ENCODE measurements at regions of chr10 and their contacts with region 1.

Region 1: GRCh38 chr10:95693668-95694534 is at the start of gene TCTN3:
- DNase-seq: peak; percentile 92 to 100 (median 95)
- ATAC-seq: peak; percentile 94
- H3K4me3 ChIP-seq: peak within 1 kb of the TSS; percentile 65 to 76
- H3K4me3 Mint-ChIP-seq: peak within 1 kb of the TSS; percentile 95
- H3K27ac ChIP-seq: peak within 1 kb of the TSS; percentile 87 to 89
- H3K27ac Mint-ChIP-seq: peak within 1 kb of the TSS; percentile 96
- H3K4me1 ChIP-seq: peaks cover 24% of the 10 kb centered on the region
- H3K4me1 Mint-ChIP-seq: peaks cover 41% of the 10 kb centered on the region
- H3K27me3 ChIP-seq: no peaks in the 10 kb centered on the region
- H3K27me3 Mint-ChIP-seq: peaks cover 3% of the 10 kb centered on the region
- CTCF ChIP-seq: peak; percentile 98
- total RNA-seq, gene TCTN3: 14.3 to 15.6 TPM

Region 2: DNA sequence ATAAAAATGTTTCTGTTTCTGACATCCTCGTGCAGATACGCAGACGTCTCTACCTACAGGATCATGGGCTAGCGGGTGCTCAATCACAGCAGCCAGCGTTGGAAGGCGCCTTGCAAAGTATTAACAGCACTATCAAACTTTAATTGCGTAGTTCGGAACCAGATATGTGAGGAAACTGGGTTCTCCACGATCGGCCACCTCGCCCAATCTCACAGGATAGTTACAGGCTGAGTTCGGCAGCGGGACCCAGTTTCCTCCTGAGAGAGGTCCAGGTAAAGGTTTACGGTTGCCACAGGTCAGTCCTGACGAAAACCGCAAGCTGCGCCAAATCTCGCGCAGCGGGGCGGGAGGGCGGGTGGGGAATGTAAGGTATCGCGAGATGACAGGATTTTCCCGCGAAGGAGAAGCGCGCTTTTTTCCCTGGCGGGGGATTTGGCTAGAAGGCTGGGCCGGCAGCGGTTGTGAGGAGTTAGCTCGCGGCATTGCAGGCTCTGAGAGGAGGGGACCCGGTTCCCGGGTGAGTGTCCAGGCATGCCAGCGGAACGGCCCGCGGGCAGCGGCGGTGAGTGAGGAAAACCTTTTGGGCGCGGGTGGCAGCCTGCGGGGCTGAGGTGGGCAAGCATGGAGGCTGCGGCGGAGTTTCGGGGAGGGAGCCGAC is 1148.4 kb before region 1 on chr10 and contains the start of gene HELLS:
- CTCF ChIA-PET with region 1: no interaction called
- POLR2A ChIA-PET with region 1: no interaction called
- intact Hi-C with region 1: loop called in 1 of 2 experiments (anchors 10 kb)
- DNase-seq: peak; percentile 17 to 83 (median 63)
- ATAC-seq: peak; percentile 76
- H3K4me3 ChIP-seq: peak within 1 kb of the TSS; percentile 90
- H3K4me3 Mint-ChIP-seq: peak within 1 kb of the TSS; percentile 93
- H3K27ac ChIP-seq: peak within 1 kb of the TSS; percentile 70 to 71
- H3K27ac Mint-ChIP-seq: peak within 1 kb of the TSS; percentile 93
- H3K4me1 ChIP-seq: peaks cover 18% of the 10 kb centered on the region
- H3K4me1 Mint-ChIP-seq: peaks cover 23% of the 10 kb centered on the region
- H3K27me3 ChIP-seq: no peaks in the 10 kb centered on the region
- H3K27me3 Mint-ChIP-seq: no peaks in the 10 kb centered on the region
- CTCF ChIP-seq: no peak
- total RNA-seq, gene HELLS: 8.7 to 9.1 TPM

Region 3: DNA sequence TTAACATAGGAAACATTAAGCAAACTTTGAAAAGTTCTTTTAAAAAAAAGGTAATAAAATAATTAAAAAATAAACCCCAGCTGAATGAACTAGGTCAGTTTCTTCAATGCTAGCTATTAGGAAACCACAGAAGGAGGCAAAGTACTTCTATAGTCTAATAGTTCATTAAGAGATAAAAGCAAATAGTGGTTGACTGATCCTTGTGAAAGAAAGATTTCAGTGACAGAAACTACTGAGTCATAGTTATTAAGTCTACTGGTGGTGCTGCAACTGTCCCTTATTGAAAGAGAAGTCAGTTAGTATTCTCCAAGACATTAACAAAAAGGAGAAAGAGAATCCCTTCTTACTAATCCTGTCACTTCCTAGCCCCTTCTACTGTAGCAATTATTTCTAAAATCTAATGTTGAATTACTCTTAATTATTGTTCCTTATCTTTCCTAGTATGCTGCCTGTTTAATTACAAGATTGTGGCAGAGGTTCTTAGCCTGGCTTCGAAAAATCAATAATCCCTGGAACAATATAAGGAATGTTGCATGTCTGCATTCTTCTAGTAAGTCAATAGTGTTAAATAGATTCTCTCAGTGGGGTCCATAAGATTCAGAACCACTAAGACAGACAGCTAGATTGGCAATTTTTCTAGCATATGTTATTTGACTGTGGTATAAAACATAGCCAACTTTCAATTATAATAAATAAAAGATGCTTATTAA is 18.3 kb before region 1 on chr10:
- CTCF ChIA-PET with region 1: interaction called, 20 read pairs
- POLR2A ChIA-PET with region 1: interaction called, 4 read pairs
- intact Hi-C with region 1: no loop called
- DNase-seq: no peak
- ATAC-seq: no peak
- H3K4me3 ChIP-seq: no peak overlapping the region
- H3K4me3 Mint-ChIP-seq: no peak overlapping the region
- H3K27ac ChIP-seq: no peak overlapping the region
- H3K27ac Mint-ChIP-seq: no peak overlapping the region
- H3K4me1 ChIP-seq: no peaks in the 10 kb centered on the region
- H3K4me1 Mint-ChIP-seq: no peaks in the 10 kb centered on the region
- H3K27me3 ChIP-seq: no peaks in the 10 kb centered on the region
- H3K27me3 Mint-ChIP-seq: no peaks in the 10 kb centered on the region
- CTCF ChIP-seq: no peak

Region 4: DNA sequence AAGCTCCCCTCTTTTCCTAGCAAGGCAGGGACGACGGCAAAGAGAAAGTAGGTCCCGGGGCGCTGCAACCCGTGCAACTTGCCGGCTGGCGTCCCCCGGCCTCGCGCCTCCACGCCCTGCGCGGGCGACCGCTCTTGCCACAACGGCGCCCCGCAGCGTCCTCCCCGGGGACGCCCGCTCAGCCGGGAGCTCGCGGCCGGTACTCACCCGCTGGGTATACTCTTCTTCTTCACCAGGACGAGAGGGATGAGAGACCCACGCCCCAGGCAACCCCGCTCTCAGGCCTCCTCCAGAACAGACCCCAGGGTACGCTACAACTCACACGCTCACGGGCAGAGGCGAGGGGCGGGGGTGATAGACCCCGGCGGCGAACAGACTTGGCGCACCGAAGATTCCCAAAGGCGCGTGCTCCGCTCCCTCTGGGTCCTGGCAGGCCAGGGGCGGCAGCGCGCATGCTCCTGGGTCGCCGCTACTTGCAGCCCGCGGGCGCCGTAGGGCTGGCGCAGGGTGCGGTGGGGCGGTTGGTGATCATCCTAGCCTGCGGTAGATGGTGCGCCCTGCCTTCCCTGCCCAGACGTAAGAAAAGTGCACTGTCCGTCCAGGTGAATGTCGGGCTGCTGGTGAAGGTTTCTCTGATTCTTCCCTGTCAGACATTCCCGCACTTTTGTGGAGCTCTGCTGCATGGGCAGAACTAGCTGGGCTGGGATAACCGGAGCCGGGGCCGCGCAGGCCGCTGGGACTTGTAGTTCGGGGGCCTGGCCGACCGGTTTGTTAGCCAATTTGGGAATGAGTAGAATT is 213.8 kb after region 1 on chr10 and contains the start of gene CC2D2B:
- CTCF ChIA-PET with region 1: interaction called, 8 read pairs
- POLR2A ChIA-PET with region 1: interaction called, 3 read pairs
- intact Hi-C with region 1: loop called (anchors 1 to 5 kb)
- DNase-seq: peak; percentile 21 to 79 (median 59)
- ATAC-seq: peak; percentile 72
- H3K4me3 ChIP-seq: peak within 1 kb of the TSS; percentile 77 to 82
- H3K4me3 Mint-ChIP-seq: peak within 1 kb of the TSS; percentile 90
- H3K27ac ChIP-seq: peak within 1 kb of the TSS; percentile 61 to 67
- H3K27ac Mint-ChIP-seq: peak within 1 kb of the TSS; percentile 83
- H3K4me1 ChIP-seq: no peaks in the 10 kb centered on the region
- H3K4me1 Mint-ChIP-seq: peaks cover 18% of the 10 kb centered on the region
- H3K27me3 ChIP-seq: no peaks in the 10 kb centered on the region
- H3K27me3 Mint-ChIP-seq: no peaks in the 10 kb centered on the region
- CTCF ChIP-seq: no peak
- total RNA-seq, gene CC2D2B: not detected

Region 5: DNA sequence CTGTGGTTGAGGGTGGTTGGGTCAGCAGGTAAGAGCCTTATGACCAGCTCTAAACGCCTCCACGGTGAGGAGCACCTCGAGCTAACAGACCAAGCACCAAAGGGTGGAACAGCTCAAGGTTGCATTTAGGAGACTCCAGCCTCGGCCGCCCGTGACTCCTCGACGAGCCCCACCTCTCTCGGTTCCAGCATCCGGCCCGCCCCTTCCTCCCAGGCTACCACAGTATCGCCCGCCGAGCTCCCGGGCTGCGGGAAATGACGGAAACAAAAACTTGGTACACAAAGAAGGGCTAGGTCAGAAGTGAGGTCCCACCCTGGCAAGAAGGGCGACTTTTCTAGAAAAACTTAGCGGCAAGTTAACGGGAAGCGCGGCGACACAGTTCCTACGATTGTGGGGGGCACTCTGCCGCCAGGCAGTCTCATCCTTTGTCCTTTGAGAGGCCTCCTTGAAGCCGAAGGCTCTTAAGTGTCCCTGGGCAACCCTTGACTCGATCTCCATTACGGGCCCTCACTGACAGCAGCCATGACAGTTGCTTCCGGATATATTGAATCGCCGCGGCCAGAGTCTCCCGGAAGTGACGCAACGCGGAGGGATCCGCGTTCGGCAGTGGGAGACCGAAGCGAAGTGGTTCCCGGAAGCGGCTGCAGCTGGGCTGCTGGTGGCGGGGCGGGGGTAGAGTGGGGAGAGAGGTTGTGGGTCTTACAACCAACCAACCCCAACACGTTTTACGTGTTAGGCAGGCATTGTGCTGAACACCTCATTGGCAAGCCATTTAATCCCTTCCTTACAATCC is 396.0 kb after region 1 on chr10:
- CTCF ChIA-PET with region 1: no interaction called
- POLR2A ChIA-PET with region 1: interaction called, 5 read pairs
- intact Hi-C with region 1: loop called in 1 of 2 experiments (anchors 1 kb)
- DNase-seq: peak; percentile 85 to 98 (median 92)
- ATAC-seq: peak; percentile 87
- H3K4me3 ChIP-seq: peak overlapping the region; percentile 69 to 71
- H3K4me3 Mint-ChIP-seq: peak overlapping the region; percentile 95
- H3K27ac ChIP-seq: peak overlapping the region; percentile 91 to 97
- H3K27ac Mint-ChIP-seq: peak overlapping the region; percentile 99
- H3K4me1 ChIP-seq: peaks cover 6% of the 10 kb centered on the region
- H3K4me1 Mint-ChIP-seq: peaks cover 12% of the 10 kb centered on the region
- H3K27me3 ChIP-seq: no peaks in the 10 kb centered on the region
- H3K27me3 Mint-ChIP-seq: peaks cover 21% of the 10 kb centered on the region
- CTCF ChIP-seq: no peak

Region 6: DNA sequence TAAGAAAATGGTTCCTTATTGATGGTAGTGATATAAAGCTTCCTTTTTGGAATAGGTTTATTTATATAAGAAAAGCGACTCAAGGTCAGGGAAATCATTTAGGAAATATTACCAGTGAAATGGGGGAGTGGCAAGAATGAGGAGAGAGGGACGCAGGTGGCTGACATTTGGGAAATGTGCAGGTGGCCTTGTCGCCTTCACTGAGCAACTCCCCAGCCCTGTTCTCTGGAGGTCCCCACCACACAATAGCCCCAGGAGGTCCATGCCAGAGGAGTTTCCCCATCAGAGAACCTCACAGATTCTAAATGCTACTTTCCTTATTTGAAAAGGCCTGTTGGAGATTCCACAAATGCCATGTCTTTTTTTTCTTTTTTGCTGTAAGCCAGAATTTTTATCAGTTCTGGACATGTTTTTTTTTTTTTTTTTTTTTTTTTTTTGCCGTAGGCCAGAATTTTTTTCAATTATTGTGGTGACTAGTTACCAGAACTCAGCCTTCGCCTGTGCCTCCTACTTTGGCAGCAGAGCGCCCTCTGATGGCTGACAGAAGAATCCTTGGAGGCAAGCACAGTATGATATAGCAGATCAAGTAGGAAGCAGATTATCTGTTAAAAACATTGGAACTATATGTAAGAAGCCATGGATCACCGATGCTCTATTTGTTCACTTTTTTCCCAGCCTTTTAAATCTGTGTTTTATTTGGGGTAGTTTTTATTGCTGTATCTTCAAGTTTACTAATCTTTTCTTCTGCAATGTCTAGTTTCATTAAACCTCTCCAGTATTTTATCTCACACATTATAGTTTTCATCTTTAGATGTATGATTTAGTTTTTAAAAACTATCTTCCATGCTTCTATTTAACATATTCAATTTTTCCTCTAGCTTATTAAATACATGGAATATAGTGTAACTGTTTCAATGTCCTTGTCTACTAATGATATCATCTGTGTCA is 646.3 kb after region 1 on chr10:
- CTCF ChIA-PET with region 1: interaction called, 5 read pairs
- POLR2A ChIA-PET with region 1: no interaction called
- intact Hi-C with region 1: loop called in 1 of 2 experiments (anchors 10 kb)
- DNase-seq: peak; percentile 8 to 73 (median 50)
- ATAC-seq: peak; percentile 72
- H3K4me3 ChIP-seq: no peak overlapping the region
- H3K4me3 Mint-ChIP-seq: no peak overlapping the region
- H3K27ac ChIP-seq: no peak overlapping the region
- H3K27ac Mint-ChIP-seq: no peak overlapping the region
- H3K4me1 ChIP-seq: no peaks in the 10 kb centered on the region
- H3K4me1 Mint-ChIP-seq: no peaks in the 10 kb centered on the region
- H3K27me3 ChIP-seq: no peaks in the 10 kb centered on the region
- H3K27me3 Mint-ChIP-seq: no peaks in the 10 kb centered on the region
- CTCF ChIP-seq: peak; percentile 69

Region 7: DNA sequence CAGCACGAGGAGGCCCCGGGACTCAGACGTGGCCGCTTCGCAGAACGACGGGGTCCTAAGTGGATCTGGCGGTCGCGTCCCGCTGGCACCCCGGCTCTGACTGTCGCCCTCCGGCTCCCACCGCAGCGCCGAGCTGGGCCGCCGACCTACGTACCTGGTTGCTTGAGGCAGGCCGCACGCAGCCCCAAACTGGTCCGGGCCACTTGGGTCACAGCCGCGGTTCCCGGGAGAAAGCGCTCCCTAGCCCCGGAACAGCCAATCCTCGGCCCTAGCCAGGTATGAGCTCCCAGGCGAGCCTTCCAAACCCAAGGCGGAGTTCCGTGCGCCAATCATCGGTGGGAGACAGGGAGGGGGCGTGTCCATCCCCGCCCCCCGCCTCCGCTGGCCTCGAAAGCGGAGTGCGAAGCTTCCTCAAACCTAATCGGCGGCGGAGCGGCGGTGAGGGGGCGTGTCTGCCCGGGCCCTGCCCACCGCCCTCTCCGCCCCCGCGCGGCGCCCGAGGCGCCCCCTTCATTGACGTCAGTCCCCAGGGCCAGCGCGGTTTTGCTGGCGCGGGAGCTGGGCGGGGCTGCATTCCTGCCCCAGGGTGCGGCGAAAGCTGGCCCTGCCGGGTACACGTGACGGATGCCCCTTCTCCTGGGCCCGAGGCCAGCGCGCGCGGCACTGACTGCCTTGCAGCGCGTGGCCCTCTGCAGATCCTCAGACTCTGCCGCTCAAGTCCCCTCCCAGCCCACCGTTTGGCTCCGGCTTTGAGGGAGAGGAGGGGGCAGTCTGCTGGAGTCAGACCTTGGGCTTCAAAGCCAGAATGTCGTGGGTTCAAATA is 1993.3 kb after region 1 on chr10 and contains the start of gene AVPI1:
- CTCF ChIA-PET with region 1: no interaction called
- POLR2A ChIA-PET with region 1: no interaction called
- intact Hi-C with region 1: loop called in 1 of 2 experiments (anchors 5 kb)
- DNase-seq: peak; percentile 90 to 98 (median 96)
- ATAC-seq: peak; percentile 94
- H3K4me3 ChIP-seq: peak within 1 kb of the TSS; percentile 77 to 82
- H3K4me3 Mint-ChIP-seq: peak within 1 kb of the TSS; percentile 89
- H3K27ac ChIP-seq: peak within 1 kb of the TSS; percentile 47 to 64
- H3K27ac Mint-ChIP-seq: peak within 1 kb of the TSS; percentile 86
- H3K4me1 ChIP-seq: peaks cover 22% of the 10 kb centered on the region
- H3K4me1 Mint-ChIP-seq: peaks cover 23% of the 10 kb centered on the region
- H3K27me3 ChIP-seq: no peaks in the 10 kb centered on the region
- H3K27me3 Mint-ChIP-seq: peaks cover 4% of the 10 kb centered on the region
- CTCF ChIP-seq: no peak
- total RNA-seq, gene AVPI1: 13.7 TPM